ENCODE measurements at regions of chr3 and their contacts with region 1.

Region 1: DNA sequence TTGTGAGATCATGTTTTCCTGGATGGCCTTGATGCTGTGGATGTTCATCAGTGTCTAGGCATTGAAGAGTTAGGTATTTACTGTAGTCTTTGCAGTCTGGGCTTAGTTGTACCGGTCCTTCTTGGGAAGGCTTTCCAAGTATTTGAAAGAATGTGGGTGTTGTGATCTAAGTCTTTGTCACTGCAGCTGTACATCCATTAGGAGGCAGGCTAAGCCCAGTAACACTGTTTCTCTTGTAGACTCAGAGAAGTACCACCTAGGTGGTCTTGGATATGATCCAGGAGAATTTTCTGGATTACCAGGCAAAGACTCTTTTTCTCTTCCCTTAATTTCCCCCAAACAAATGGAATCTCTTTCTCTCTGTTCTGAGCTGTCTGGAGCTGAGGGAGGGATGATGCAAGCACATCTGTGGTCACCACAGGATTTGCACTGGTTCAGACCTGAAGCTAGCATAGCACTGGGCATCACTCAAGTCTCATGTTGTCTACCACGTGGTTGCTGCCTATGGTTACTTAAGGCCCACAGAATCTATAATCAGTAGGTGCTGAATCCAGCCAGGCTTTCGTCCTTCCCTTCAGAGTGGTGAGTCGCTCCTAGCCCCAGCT is 227.6 kb downstream of the NECTIN3 start:
- DNase-seq: no peak
- H3K4me3 ChIP-seq: no peak overlapping the region
- H3K27ac ChIP-seq: no peak overlapping the region
- H3K4me1 ChIP-seq: no peaks in the 10 kb centered on the region
- H3K27me3 ChIP-seq: no peaks in the 10 kb centered on the region
- CTCF ChIP-seq: no peak

Region 2: GRCh38 chr3:110542552-110543150 is 756.5 kb before region 1 on chr3:
- CTCF ChIA-PET with region 1: no interaction called
- POLR2A ChIA-PET with region 1: no interaction called
- intact Hi-C with region 1: no loop called
- DNase-seq: no peak
- H3K4me3 ChIP-seq: no peak overlapping the region
- H3K27ac ChIP-seq: no peak overlapping the region
- H3K4me1 ChIP-seq: no peaks in the 10 kb centered on the region
- H3K27me3 ChIP-seq: no peaks in the 10 kb centered on the region
- CTCF ChIP-seq: no peak

Region 3: DNA sequence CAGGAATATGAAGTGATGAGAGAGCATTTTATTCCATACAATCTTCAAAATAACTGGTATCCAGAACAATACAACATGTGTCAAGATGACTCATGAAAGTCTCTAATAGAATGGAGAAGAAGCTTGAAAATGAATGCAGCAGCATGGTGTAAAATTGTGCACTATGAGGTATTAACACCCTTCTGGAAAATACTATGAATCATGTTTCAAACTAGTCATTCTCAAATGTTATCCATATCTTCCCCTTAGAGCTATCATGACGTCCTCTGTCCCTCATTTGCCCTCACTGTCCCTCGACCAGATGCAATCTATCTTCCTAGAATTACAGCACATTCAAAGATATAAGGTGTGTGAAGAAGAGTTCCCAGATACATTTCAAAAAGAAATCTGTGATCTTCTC is 29.4 kb before region 1 on chr3:
- CTCF ChIA-PET with region 1: no interaction called
- POLR2A ChIA-PET with region 1: no interaction called
- intact Hi-C with region 1: no loop called
- DNase-seq: no peak
- H3K4me3 ChIP-seq: no peak overlapping the region
- H3K27ac ChIP-seq: no peak overlapping the region
- H3K4me1 ChIP-seq: no peaks in the 10 kb centered on the region
- H3K27me3 ChIP-seq: no peaks in the 10 kb centered on the region
- CTCF ChIP-seq: no peak

Region 4: DNA sequence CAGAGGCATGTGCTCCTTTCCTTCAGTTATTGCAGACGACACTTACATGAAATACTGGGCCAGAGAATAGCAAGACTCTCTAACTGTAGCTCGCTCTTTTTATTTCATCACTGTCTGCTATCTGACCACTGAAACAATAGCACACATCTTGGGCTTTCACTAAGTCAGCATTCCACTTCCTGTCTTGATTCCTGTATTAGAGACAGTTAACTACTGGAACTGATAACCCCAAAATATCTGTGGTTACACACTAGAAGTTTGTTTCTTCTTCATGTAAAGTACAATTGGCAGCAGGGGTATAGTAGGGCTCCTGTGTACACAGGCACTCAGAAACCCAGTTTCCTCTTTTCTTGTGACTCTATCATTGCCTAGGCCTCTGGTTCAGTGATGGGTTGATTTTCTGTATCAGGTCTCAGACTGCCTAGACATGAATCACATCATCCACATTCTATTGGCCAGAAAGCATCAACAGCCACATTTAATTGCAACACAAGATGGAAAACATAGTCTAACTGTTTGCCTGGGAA is 12.6 kb after region 1 on chr3:
- CTCF ChIA-PET with region 1: no interaction called
- POLR2A ChIA-PET with region 1: no interaction called
- intact Hi-C with region 1: loop called (anchors 2 kb)
- DNase-seq: no peak
- H3K4me3 ChIP-seq: no peak overlapping the region
- H3K27ac ChIP-seq: no peak overlapping the region
- H3K4me1 ChIP-seq: peaks cover 4% of the 10 kb centered on the region; the same call in 1 of the 2 replicates
- H3K27me3 ChIP-seq: no peaks in the 10 kb centered on the region
- CTCF ChIP-seq: no peak

Region 5: DNA sequence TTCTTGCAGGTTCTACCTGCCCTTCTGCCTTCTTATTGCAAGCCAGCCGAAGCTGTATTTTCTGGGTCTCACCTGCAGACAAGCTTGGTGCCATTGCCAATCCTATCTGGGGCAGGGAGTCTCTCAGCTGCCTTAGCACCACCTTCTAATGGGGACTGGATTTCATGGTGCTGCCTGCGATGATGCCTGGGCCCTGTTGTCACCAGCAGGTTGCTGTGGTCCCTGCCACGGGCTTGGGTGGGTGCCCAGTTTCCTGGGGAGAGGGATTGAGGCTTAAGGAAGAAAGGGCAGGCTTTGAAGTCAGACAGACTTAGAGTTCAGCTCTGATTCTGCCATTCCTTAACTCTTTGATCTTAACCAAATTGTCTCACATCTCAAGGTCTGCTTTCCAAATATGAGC is 155.4 kb after region 1 on chr3:
- CTCF ChIA-PET with region 1: no interaction called
- POLR2A ChIA-PET with region 1: no interaction called
- intact Hi-C with region 1: no loop called
- DNase-seq: no peak
- H3K4me3 ChIP-seq: no peak overlapping the region
- H3K27ac ChIP-seq: no peak overlapping the region
- H3K4me1 ChIP-seq: no peaks in the 10 kb centered on the region
- H3K27me3 ChIP-seq: no peaks in the 10 kb centered on the region
- CTCF ChIP-seq: no peak